AG04449 (cell line): ENCODE measurements at regions of chr20 and their contacts with region 1.

Region 1: DNA sequence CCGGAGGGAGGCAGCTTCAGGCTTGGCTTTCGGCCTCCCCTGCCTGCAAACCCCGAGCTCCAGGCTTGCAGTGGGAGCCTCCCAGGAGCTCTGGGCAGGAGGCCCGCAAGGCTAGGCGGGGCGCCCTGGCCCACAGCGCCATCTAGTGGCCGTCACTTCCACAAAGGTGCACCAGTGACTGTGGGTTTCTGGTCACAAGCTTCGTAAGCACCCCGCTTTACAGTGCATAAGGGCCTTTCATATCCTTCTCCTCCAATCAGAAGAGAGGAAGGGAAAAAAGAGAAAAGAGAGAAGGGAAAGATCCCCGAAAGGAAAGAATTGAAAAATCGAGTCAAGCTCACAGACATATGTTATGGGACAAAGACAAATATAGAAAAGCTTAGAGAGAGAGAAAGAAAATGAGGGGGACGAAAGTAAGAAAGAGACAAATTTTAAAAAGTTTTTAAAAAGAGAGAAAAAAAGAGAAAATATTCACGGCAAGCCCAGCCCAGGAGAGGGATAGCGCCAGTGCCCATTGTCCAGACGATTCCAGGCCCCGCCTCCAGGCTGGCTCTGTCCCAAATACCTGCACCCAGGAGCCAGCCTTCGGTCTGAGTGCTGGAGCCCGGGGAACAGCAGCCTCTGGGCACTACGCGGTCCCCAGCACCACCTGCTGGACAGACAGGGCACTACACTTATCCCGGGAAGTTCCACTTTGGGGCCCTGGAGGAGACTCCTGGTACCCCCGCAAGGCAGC is 207.1 kb downstream of the PREX1 start:
- DNase-seq: no peak
- H3K4me3 ChIP-seq: peak overlapping the region; percentile 42
- CTCF ChIP-seq: peak; percentile 93

Region 2: DNA sequence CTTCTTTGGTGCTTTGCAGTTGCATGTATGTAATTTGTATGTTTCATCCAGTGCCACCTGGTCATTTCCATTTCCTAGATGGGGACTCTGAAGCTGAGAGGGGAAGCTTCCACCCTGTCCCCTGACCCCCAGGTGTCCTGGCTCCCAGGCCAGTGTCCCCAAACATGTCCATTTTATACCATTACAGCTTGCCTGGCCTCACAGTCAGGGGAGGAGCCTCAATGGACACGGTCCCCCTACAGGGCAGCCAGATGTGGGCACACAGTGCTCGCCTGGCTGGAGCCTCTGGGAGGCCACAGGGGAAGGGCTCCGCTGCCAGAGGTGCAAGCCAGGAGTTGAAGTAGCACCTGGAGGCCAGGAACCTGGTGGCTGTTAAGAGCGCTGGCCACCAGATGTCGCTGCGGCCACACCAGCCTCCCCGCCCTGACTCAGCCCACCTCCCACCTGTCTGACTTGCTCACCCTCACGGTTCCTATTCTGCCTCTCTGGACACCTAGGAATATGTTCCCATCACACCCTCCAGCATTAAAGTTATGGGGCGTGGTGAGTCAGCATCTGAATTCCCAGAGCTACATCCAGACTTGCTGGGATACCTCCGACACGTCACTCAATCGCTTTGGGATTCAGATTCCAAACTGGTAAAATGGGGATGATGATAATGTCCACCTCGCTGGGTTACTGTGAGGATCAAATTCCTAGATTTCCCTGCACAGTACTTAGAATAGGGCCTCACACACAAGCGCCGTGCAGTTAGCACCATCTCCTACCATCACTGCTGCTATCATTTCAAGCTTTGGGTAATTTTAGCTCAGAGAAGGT is 942.8 kb before region 1 on chr20:
- CTCF ChIA-PET with region 1: interaction called, 422 read pairs
- POLR2A ChIA-PET with region 1: no interaction called
- DNase-seq: no peak
- H3K4me3 ChIP-seq: no peak overlapping the region
- CTCF ChIP-seq: peak; percentile 83

Region 3: DNA sequence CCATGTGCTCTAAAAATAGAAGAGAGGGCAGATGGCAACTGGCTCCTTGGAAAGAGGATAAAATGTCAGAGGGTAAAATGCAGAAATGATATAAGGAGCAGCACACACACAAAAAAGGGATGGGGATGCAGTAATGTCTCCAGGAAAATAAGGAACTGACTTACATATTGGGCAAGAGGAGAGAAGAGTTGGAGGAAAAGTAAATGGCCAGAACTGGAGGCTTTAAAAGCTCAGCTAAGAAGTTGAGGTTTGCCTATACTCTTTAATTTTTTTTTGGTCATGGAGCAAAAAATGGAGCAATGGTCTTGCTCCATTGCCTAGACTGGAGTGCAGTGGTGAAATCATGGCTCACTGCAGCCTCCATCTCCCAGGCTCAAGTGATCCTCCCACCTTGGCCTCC is 929.1 kb before region 1 on chr20:
- CTCF ChIA-PET with region 1: interaction called, 29 read pairs
- POLR2A ChIA-PET with region 1: no interaction called
- DNase-seq: no peak
- H3K4me3 ChIP-seq: no peak overlapping the region
- CTCF ChIP-seq: no peak

Region 4: DNA sequence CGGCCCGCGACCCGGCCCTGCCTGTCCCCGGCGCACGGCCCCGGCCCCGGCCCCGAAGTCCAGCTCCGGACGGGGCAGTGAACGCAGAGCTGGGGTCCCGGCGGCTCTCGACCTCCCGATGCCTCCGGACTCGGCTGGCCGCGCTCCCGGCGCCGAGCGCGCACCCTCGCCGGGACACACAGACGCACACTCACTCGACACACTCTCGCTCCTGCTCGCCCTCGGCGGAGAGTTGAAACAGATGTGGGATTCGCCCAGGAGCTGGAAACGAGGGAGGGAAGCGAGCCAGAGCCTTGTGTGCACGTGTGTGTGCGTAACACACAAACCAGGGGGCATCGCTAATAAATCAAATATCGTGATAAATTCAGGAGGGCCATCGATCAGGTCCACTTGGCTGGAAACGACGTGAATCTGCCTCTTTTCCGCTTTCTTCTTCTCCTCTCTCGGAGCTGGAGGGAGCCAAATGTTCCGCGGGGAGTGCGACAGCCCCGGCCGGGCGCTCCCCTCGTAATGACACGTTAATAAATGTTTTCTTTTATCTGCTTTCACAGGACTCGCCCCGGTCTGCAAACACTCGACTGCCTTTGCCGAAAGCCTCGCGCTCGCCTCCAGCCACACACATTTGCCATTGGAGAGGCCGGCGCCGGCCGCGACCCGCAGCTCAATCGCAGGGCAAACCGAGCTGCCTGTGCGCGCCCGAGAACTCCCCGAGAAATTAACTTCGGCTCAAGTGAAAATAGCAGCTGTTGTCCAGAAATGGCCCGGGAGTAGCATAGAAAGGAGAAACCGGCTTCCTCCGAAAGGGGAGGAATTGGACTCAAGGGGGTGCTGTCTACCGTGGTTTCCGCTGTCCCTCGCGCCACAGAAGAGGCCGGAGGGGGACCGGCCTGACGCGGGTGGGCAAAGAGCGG is 834.6 kb before region 1 on chr20:
- CTCF ChIA-PET with region 1: interaction called, 60 read pairs
- POLR2A ChIA-PET with region 1: interaction called, 3 read pairs
- DNase-seq: peak; percentile 29
- H3K4me3 ChIP-seq: peak overlapping the region; percentile 66
- CTCF ChIP-seq: peak; percentile 75

Region 5: DNA sequence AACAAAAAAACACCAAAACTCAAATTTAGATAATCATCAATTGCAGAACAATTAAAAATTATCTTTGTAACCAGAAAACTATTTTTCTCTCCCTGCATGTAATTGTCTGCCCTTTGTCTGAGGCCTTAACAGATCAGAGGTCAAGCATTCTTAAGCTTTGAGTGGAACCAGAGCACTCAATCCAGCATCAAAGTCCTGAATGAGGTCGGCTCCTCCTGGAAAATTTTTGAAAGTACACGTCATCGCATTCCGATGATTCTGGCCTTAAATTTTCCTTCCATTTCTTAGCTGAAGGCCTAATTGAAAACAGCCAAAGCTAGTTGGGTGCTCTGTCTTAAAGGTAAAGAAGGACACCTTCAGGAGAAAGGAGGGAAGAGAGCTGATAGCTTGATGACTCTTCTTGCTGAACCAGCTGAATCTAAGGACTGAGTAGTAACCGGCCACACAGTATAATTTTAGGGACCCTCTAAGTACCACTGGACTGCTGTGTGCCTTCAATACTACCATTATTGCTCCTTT is 325.2 kb before region 1 on chr20:
- CTCF ChIA-PET with region 1: interaction called, 38 read pairs
- POLR2A ChIA-PET with region 1: no interaction called
- DNase-seq: peak; percentile 81
- H3K4me3 ChIP-seq: no peak overlapping the region
- CTCF ChIP-seq: peak; percentile 45

Region 6: GRCh38 chr20:48455651-48456358 is 164.9 kb before region 1 on chr20:
- CTCF ChIA-PET with region 1: no interaction called
- POLR2A ChIA-PET with region 1: no interaction called
- DNase-seq: no peak
- H3K4me3 ChIP-seq: no peak overlapping the region
- CTCF ChIP-seq: no peak

Region 7: DNA sequence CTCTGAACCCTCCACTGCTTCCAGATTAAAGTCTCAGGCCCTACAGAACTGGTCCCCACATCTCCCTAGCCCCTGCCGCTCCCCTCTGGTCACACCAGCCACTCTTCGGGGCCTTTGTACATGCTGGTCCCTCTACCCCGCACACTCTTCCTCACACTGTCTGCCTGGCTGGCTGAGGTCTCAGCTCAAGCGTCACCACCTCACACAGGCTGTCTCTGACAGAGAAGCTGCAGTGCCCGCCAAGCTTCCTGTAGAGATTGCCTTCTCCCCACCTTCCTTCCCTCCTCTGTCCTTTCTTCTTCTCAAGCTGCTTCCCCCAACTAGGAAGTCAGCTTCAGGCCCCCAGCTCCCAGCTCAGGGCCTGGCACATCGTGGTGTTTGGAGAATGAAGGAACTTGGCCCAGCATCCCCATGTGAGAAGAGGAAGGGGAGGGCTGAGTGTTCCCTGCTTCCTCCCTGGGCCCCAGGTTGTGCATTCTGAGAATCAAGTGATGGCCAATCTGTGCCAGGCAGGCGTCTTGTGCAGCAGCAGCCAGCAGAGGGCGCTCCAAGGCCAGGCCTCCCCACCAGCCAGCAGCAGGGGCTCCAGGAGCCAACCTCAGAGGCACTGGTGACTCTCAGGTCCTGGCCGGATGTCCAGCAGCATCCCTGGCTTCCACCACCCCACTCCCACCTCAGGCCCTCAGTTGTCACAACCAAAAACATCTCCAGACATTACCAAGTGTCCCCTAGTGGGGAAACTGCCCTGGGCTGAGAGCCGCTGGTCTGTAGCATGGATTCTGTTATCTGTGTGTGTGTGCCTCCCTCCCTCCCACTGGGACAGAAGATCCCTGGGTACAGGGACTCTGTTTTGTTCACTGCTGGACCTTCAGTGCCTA is 15.0 kb after region 1 on chr20:
- CTCF ChIA-PET with region 1: interaction called, 53 read pairs
- POLR2A ChIA-PET with region 1: no interaction called
- DNase-seq: no peak
- H3K4me3 ChIP-seq: no peak overlapping the region
- CTCF ChIP-seq: peak; percentile 96

Region 8: GRCh38 chr20:48897246-48897994 is 276.7 kb after region 1 on chr20:
- CTCF ChIA-PET with region 1: no interaction called
- POLR2A ChIA-PET with region 1: no interaction called
- DNase-seq: no peak
- H3K4me3 ChIP-seq: no peak overlapping the region
- CTCF ChIP-seq: no peak